Left ventricle myocardium inferior (tissue), 1 donor: ENCODE measurements at regions of chr7 and their contacts with region 1.

Region 1: GRCh38 chr7:139783647-139784385 is 6.0 kb upstream of the HIPK2 start:
- DNase-seq: no peak
- H3K4me3 ChIP-seq: no peak overlapping the region
- H3K27ac ChIP-seq: no peak overlapping the region
- H3K4me1 ChIP-seq: peaks cover 5% of the 10 kb centered on the region
- H3K27me3 ChIP-seq: peaks cover 8% of the 10 kb centered on the region
- CTCF ChIP-seq: no peak

Region 2: DNA sequence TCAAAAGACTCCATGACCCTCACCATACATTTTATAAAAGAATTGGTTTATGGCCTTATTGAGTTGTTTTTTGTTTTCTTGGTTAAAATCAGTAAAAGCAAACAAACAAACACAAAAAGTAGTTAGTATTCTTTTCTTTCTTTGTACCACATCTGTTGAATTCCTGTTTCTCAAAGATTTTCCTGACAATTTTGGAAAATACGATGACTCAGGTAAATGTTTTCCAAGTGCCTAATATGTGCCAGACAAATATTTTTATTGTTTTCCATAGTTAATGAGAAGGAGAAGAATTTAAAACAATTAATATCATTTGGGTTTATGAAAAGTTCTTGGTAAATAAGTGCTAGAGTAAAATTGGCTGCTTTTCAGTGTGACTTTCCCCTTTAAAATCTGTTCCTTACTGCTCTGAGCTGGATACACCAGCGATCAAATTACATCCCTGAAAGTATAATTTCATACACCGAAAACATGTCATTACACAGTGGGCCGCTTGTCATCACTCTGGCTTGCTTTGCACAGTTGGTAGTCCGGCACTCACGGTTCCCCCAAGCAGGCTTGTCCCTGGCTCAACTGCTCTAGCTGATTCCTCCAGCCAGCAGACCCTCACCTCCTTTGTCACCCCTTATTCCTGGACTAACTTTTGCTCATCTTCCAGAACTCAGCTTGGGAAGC is 125.7 kb after region 1 on chr7:
- intact Hi-C with region 1: loop called (anchors 10 kb)
- DNase-seq: no peak
- H3K4me3 ChIP-seq: no peak overlapping the region
- H3K27ac ChIP-seq: no peak overlapping the region
- H3K4me1 ChIP-seq: peaks cover 5% of the 10 kb centered on the region
- H3K27me3 ChIP-seq: no peaks in the 10 kb centered on the region
- CTCF ChIP-seq: no peak

Region 3: GRCh38 chr7:140358412-140359051 is 574.7 kb after region 1 on chr7:
- intact Hi-C with region 1: no loop called
- DNase-seq: no peak
- H3K4me3 ChIP-seq: no peak overlapping the region
- H3K27ac ChIP-seq: no peak overlapping the region
- H3K4me1 ChIP-seq: no peaks in the 10 kb centered on the region
- H3K27me3 ChIP-seq: no peaks in the 10 kb centered on the region
- CTCF ChIP-seq: no peak

Region 4: GRCh38 chr7:140924019-140924820 is 1140.4 kb after region 1 on chr7:
- intact Hi-C with region 1: no loop called
- DNase-seq: peak; percentile 81
- H3K4me3 ChIP-seq: peak overlapping the region; percentile 96
- H3K27ac ChIP-seq: peak overlapping the region; percentile 98
- H3K4me1 ChIP-seq: peaks cover 52% of the 10 kb centered on the region
- H3K27me3 ChIP-seq: no peaks in the 10 kb centered on the region
- CTCF ChIP-seq: peak; percentile 45